GM12878 (cell line): ENCODE measurements at regions of chr17 and their contacts with region 1.

Region 1: DNA sequence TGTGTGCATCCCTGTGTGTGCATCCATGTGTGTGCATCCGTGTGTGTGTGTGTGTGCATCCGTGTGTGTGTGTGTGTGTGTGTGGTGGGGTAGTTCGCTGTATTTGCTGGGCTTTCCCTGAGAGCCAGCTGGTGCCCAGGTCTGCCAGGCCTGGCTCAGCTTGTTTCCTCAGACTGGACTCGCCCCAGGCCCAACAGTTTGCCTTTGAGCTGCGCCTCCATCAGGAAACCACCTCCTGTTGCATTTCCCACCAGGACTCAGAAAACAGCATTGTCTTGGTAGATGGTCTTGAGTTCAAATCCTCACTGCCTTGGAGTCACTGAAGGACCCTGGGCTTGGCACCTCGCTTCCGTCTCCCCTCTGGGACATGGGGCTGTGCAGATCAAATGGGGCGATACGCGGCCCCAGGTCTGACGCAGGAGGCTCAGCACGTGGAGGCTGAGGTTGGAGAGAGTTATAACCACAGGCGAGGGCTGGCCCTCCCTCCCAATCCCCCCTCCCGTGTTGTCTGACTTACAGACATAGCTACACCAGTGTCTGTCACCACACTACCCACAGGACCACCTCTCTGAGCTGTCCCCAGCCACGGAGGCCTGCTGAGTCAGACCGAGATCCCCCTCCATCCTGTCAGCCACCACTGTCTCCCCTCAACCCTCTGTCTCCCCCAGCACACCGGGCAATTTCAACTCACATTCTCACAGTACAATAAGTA is 4.7 kb downstream of the ITGAE start:
- DNase-seq: peak; percentile 90
- ATAC-seq: peak; percentile 86
- H3K4me3 ChIP-seq: no peak overlapping the region; the same call in 1 of the 2 replicates
- H3K27ac ChIP-seq: peak overlapping the region; percentile 63
- H3K4me1 ChIP-seq: peaks cover 47% of the 10 kb centered on the region
- H3K27me3 ChIP-seq: no peaks in the 10 kb centered on the region
- CTCF ChIP-seq: no peak
- EP300 ChIP-seq: peak; percentile 81 to 88
- POLR2A ChIP-seq: no peak; the same call in 1 of the 2 replicates
- RAD21 ChIP-seq: no peak

Region 2: GRCh38 chr17:3695723-3696411 is 100.4 kb before region 1 on chr17 and contains the start of gene P2RX5:
- CTCF ChIA-PET with region 1: no interaction called
- POLR2A ChIA-PET with region 1: no interaction called
- RAD21 ChIA-PET with region 1: no interaction called
- SMC1A ChIA-PET with region 1: no interaction called
- in situ Hi-C with region 1: no loop called
- intact Hi-C with region 1: loop called (anchors 2 kb)
- DNase-seq: no peak
- ATAC-seq: peak; percentile 48
- H3K4me3 ChIP-seq: peak within 1 kb of the TSS; percentile 56
- H3K27ac ChIP-seq: peak within 1 kb of the TSS; percentile 61
- H3K4me1 ChIP-seq: peaks cover 32% of the 10 kb centered on the region
- H3K27me3 ChIP-seq: no peaks in the 10 kb centered on the region
- CTCF ChIP-seq: no peak
- EP300 ChIP-seq: no peak
- POLR2A ChIP-seq: peak; percentile 71
- RAD21 ChIP-seq: no peak
- polyA plus RNA-seq, gene P2RX5: 6.9 to 14.2 TPM

Region 3: DNA sequence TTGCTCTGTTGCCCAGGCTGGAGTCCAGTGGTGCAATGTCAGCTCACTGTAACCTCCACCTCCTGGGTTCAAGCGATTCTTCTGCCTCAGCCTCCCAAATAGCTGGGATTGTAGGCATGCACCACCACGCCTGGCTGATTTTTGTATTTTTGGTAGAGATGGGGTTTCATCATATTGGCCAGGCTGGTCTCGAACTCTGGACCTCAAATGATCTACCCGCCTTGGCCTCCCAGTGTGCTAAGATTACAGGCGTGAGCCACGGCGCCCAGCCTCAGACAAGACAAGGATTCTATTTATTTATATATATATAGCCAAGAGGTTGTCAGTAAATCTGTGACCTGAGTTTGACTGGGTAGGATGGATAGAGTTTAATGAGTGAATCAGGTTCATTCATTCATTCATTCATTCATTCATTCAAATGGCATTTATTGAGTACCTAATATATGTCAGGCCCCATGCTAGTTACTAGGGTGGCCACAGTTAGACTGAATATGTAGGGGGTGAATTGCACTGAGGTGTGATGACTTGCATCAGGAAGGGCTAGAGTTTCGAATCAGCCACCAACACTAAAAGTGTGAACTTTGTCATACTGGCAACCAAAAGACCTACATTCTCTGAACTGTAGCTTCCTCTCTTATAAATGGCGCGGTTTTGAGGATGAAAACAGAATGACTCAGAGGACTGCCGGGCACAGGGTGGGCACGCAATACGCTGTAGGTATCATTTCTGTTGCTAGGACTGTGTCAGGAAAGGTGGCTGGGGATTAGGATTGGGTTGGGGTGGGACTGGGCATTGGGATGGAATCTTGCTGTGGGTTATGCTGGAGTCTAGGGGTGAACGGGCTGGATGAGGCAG is 33.1 kb before region 1 on chr17:
- CTCF ChIA-PET with region 1: interaction called, 6 read pairs
- POLR2A ChIA-PET with region 1: interaction called, 3 read pairs
- RAD21 ChIA-PET with region 1: interaction called, 4 read pairs
- SMC1A ChIA-PET with region 1: no interaction called
- in situ Hi-C with region 1: no loop called
- intact Hi-C with region 1: loop called (anchors 1 kb)
- DNase-seq: peak; percentile 89
- ATAC-seq: peak; percentile 93
- H3K4me3 ChIP-seq: no peak overlapping the region
- H3K27ac ChIP-seq: peak overlapping the region; percentile 57
- H3K4me1 ChIP-seq: peaks cover 28% of the 10 kb centered on the region
- H3K27me3 ChIP-seq: no peaks in the 10 kb centered on the region
- CTCF ChIP-seq: no peak
- EP300 ChIP-seq: peak; percentile 92 to 93
- POLR2A ChIP-seq: 0 out of 2 replicates have a peak, but pooled peaks have one; percentile 32
- RAD21 ChIP-seq: 0 out of 2 replicates have a peak, but pooled peaks have one; percentile 1

Region 4: GRCh38 chr17:3780986-3781385 is 15.3 kb before region 1 on chr17:
- CTCF ChIA-PET with region 1: no interaction called
- POLR2A ChIA-PET with region 1: no interaction called
- RAD21 ChIA-PET with region 1: no interaction called
- SMC1A ChIA-PET with region 1: no interaction called
- in situ Hi-C with region 1: no loop called
- intact Hi-C with region 1: no loop called
- DNase-seq: no peak
- ATAC-seq: no peak
- H3K4me3 ChIP-seq: no peak overlapping the region
- H3K27ac ChIP-seq: no peak overlapping the region
- H3K4me1 ChIP-seq: no peaks in the 10 kb centered on the region
- H3K27me3 ChIP-seq: no peaks in the 10 kb centered on the region
- CTCF ChIP-seq: no peak
- EP300 ChIP-seq: no peak
- POLR2A ChIP-seq: no peak
- RAD21 ChIP-seq: no peak